ENCODE measurements at regions of chrX and their contacts with region 1.

Region 1: DNA sequence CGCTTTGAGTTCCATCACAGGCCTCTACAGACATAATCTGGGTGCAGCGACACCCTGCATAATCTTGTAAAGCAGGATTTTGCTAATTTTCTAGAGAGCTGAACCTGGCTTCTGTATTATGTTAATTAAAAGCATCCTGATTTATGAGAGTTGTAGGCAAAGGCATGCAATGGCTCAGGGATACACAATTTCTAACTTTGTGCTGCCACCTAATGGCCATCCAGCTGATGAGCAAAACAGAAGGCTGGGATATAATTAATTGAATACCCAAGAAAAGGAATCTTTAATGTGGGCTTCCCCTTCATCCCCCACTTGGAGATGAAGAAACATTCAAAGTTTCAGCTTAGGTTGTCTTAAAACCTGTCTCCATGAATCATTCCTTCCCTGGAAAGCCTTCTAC is 78.1 kb downstream of the BMP15 start:
- DNase-seq: peak; percentile 28
- H3K4me3 ChIP-seq: no peak overlapping the region
- H3K27ac ChIP-seq: no peak overlapping the region
- H3K4me1 ChIP-seq: no peaks in the 10 kb centered on the region
- H3K27me3 ChIP-seq: peaks cover 3% of the 10 kb centered on the region
- CTCF ChIP-seq: peak; percentile 60 to 67

Region 2: GRCh38 chrX:50905334-50905733 is 83.3 kb before region 1 on chrX:
- CTCF ChIA-PET with region 1: no interaction called
- dilution Hi-C with region 1: no loop called
- in situ Hi-C with region 1: no loop called
- intact Hi-C with region 1: loop called (anchors 2 kb)
- DNase-seq: peak; percentile 11
- H3K4me3 ChIP-seq: no peak overlapping the region
- H3K27ac ChIP-seq: no peak overlapping the region
- H3K4me1 ChIP-seq: no peaks in the 10 kb centered on the region
- H3K27me3 ChIP-seq: peaks cover 2% of the 10 kb centered on the region
- CTCF ChIP-seq: peak; percentile 43 to 58

Region 3: GRCh38 chrX:50920132-50920531 is 68.5 kb before region 1 on chrX:
- CTCF ChIA-PET with region 1: no interaction called
- dilution Hi-C with region 1: no loop called
- in situ Hi-C with region 1: no loop called
- intact Hi-C with region 1: loop called (anchors 2 kb)
- DNase-seq: peak; percentile 23
- H3K4me3 ChIP-seq: no peak overlapping the region
- H3K27ac ChIP-seq: no peak overlapping the region
- H3K4me1 ChIP-seq: no peaks in the 10 kb centered on the region
- H3K27me3 ChIP-seq: no peaks in the 10 kb centered on the region
- CTCF ChIP-seq: peak; percentile 57 to 62

Region 4: GRCh38 chrX:51395810-51396728 is 407.4 kb after region 1 on chrX:
- CTCF ChIA-PET with region 1: no interaction called
- dilution Hi-C with region 1: no loop called
- in situ Hi-C with region 1: no loop called
- intact Hi-C with region 1: no loop called
- DNase-seq: no peak
- H3K4me3 ChIP-seq: peak overlapping the region in 1 of 3 experiments; percentile 23
- H3K27ac ChIP-seq: no peak overlapping the region
- H3K4me1 ChIP-seq: peaks cover 5% of the 10 kb centered on the region
- H3K27me3 ChIP-seq: no peaks in the 10 kb centered on the region
- CTCF ChIP-seq: no peak